ENCODE measurements at regions of chr17 and their contacts with region 1.

Region 1: GRCh38 chr17:43410557-43411368 is 12.0 kb downstream of the ARL4D start:
- DNase-seq: no peak
- ATAC-seq: peak in 1 of 4 donors; percentile 24
- H3K4me3 ChIP-seq: no peak overlapping the region
- H3K27ac ChIP-seq: no peak overlapping the region
- H3K4me1 ChIP-seq: no peaks in the 10 kb centered on the region
- H3K27me3 ChIP-seq: peaks cover 0 to 5% (median 0%) of the 10 kb centered on the region in 3 donors
- CTCF ChIP-seq: no peak

Region 2: GRCh38 chr17:43456661-43457361 is 46.0 kb after region 1 on chr17:
- intact Hi-C with region 1: no loop called
- DNase-seq: peak in 1 of 2 donors; percentile 42
- ATAC-seq: peak; percentile 78 to 87 (median 84)
- H3K4me3 ChIP-seq: no peak overlapping the region
- H3K27ac ChIP-seq: no peak overlapping the region
- H3K4me1 ChIP-seq: peaks cover 4% of the 10 kb centered on the region
- H3K27me3 ChIP-seq: peaks cover 0 to 3% (median 0%) of the 10 kb centered on the region in 3 donors
- CTCF ChIP-seq: no peak

Region 3: GRCh38 chr17:43467981-43468581 is 57.3 kb after region 1 on chr17:
- intact Hi-C with region 1: loop called in 1 of 2 experiments (anchors 5 kb)
- DNase-seq: no peak
- ATAC-seq: peak; percentile 9 to 48 (median 42)
- H3K4me3 ChIP-seq: no peak overlapping the region
- H3K27ac ChIP-seq: peak overlapping the region; percentile 23
- H3K4me1 ChIP-seq: no peaks in the 10 kb centered on the region
- H3K27me3 ChIP-seq: peaks cover 0 to 4% (median 3%) of the 10 kb centered on the region in 3 donors
- CTCF ChIP-seq: no peak